Activated CD4-positive, alpha-beta T cell treated with anti-CD3 and anti-CD28 coated beads, Interleukin-2, amount 10 ng/mL, durations not matched to agents 7 days and 5 days (primary cell): ENCODE measurements at regions of chr1 and their contacts with region 1.

Region 1: GRCh38 chr1:192609110-192610079 is 26.6 kb upstream of the RGS13 start:
- DNase-seq: peak; percentile 71
- H3K4me3 Mint-ChIP-seq: peak overlapping the region; percentile 15
- H3K27ac Mint-ChIP-seq: peak overlapping the region; percentile 84
- H3K4me1 Mint-ChIP-seq: peaks cover 18% of the 10 kb centered on the region
- H3K27me3 Mint-ChIP-seq: no peaks in the 10 kb centered on the region

Region 2: GRCh38 chr1:192474080-192474683 is 135.2 kb before region 1 on chr1:
- CTCF ChIA-PET with region 1: interaction called, 12 read pairs
- POLR2A ChIA-PET with region 1: no interaction called
- DNase-seq: peak; percentile 18
- H3K4me3 Mint-ChIP-seq: no peak overlapping the region
- H3K27ac Mint-ChIP-seq: no peak overlapping the region
- H3K4me1 Mint-ChIP-seq: no peaks in the 10 kb centered on the region
- H3K27me3 Mint-ChIP-seq: peaks cover 14% of the 10 kb centered on the region

Region 3: DNA sequence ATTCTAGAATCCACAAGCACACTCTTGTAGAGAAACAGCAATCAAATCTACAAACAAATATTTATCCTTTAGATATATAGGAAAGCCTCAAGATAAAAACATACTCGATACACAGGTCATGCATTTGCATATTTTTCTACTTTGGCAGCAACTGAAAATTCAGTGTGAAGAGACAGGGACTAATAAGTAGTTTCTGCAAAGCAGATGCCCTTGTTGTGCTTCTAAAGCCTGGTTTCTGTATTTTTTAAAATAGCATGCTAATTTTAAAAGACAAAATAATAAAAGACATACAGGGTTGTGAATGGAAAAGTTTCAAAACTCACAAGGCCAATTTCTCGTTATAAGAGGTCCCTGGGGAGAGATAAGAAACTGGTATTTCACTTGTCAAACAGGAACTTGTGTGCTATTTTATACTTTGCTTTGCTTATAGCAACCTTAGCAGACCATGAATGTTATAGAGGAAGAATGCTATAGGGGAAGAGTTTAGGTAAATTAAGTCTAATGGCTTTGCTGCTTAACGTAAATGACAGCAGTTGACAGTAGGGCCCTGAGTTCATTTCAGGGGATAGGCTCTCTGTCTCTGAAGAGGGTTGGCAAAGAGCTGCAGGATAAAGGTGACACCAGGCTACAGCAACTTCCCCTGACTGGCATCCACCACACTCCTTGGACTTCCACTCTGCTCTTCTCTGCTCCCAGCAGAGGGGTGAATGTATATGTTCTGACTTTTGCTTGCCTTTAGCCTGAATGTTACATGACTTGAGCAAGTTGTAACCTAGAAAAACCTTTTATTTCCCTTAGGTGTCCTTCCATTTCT is 17.2 kb after region 1 on chr1:
- CTCF ChIA-PET with region 1: no interaction called
- POLR2A ChIA-PET with region 1: no interaction called
- DNase-seq: no peak
- H3K4me3 Mint-ChIP-seq: no peak overlapping the region
- H3K27ac Mint-ChIP-seq: no peak overlapping the region
- H3K4me1 Mint-ChIP-seq: no peaks in the 10 kb centered on the region
- H3K27me3 Mint-ChIP-seq: peaks cover 2% of the 10 kb centered on the region